ENCODE measurements at regions of chr1 and their contacts with region 1.

Region 1: GRCh38 chr1:119613769-119614720 is 34.0 kb downstream of the ZNF697 start:
- DNase-seq: peak; percentile 81
- ATAC-seq: peak; percentile 91

Region 2: GRCh38 chr1:119516678-119517077 is 97.4 kb before region 1 on chr1:
- intact Hi-C with region 1: no loop called
- DNase-seq: no peak
- ATAC-seq: no peak

Region 3: DNA sequence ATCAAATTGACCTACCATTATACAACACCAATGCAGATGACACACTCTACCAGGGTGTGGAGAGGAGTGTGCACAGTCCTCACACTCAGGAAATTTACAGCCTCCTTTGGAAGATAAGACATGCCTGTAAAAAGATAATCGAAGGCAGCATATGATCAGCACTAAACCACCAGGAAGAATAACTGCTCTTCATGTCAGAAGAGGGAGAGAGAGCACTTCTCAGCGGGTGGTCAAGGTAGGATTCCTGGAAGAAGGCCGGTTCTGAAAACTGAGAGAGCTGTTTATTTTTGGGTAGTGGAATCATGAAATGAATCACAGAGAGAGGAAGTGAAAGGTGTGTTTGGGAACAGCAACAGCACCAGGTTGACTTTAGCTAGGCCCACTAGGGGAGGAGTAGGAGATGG is 48.0 kb after region 1 on chr1:
- intact Hi-C with region 1: loop called (anchors 2 kb)
- DNase-seq: no peak
- ATAC-seq: no peak

Region 4: DNA sequence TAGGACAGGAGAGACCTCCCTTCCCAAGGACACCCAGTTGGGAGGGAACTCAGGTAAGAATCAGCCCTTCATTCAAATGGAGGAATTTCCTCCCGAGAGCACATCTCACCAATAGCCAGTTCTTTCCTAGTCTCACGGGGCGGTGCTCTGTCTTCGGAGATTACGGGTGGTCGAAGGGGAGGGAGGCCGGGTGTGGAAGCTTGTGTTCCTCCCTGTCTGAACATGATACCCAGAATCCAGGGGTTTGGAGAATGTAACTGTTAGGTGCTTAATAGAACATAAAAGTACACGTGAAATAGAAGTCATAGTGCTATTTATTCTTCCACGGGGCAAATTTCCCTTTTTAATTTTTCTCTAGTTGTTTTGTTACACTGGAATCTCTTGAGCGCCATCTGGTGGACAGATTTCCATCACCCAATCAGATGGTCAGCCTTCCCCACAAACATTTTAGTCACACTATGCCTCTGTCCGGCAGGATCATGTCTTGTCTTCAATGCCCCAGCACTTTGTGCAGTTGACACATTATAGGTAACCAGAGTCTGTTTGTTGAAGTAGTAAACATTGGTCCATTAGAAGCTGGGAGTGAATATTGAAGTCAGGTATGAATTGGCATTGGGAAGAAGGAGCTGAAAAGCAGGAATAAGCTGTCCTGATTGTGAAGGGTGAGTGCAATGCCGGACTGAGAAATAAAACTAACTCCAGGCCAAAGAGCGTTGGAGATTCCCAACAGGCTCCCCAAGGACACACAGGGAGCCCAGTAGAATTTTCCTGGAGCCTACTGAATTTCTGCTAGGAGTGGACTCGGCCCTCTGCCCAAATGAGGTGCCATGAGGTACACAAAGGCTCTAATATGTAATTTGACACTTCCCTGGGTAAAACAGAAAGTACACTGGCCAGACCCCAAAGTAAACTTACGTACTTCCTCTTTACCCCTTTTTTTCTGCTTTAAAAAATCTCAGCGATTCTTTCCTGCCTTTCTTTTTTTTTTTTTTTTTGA is 61.6 kb after region 1 on chr1:
- intact Hi-C with region 1: loop called (anchors 5 kb)
- DNase-seq: peak; percentile 36
- ATAC-seq: peak; percentile 80